GM10248 (cell line): ENCODE measurements at regions of chr10 and their contacts with region 1.

Region 1: GRCh38 chr10:91251430-91252056 is 31.1 kb downstream of the PCGF5 start:
- DNase-seq: peak; percentile 31
- CTCF ChIP-seq: peak; percentile 75

Region 2: GRCh38 chr10:90879062-90879461 is 372.5 kb before region 1 on chr10:
- CTCF ChIA-PET with region 1: interaction called, 24 read pairs
- POLR2A ChIA-PET with region 1: no interaction called
- DNase-seq: no peak
- CTCF ChIP-seq: no peak

Region 3: DNA sequence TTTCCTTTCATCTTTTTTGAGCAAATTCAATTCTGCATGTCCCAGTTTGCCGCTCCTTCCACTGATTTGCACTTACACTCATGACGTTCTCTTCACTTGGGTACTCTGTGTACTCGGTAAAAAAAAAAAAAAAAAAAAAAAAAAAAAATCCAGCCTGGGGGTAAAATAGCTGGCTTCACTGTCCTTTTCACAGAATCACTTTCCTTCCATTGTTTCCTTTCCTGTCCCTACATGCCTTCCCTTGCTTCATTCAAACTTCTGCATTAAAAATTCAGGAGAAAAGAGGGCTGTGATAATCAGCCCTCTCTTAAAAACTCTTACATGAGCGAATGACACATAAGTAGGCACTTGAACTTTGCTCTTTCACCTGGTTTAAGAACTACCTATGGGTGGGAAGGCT is 339.4 kb before region 1 on chr10:
- CTCF ChIA-PET with region 1: interaction called, 113 read pairs
- POLR2A ChIA-PET with region 1: interaction called, 4 read pairs
- DNase-seq: no peak
- CTCF ChIP-seq: no peak

Region 4: GRCh38 chr10:90999512-91000172 is 251.9 kb before region 1 on chr10:
- CTCF ChIA-PET with region 1: interaction called, 59 read pairs
- POLR2A ChIA-PET with region 1: no interaction called
- DNase-seq: peak; percentile 24
- CTCF ChIP-seq: no peak

Region 5: GRCh38 chr10:91017198-91017597 is 234.3 kb before region 1 on chr10:
- CTCF ChIA-PET with region 1: interaction called, 19 read pairs
- POLR2A ChIA-PET with region 1: no interaction called
- DNase-seq: no peak
- CTCF ChIP-seq: no peak

Region 6: GRCh38 chr10:91088300-91089140 is 163.0 kb before region 1 on chr10:
- CTCF ChIA-PET with region 1: interaction called, 19 read pairs
- POLR2A ChIA-PET with region 1: no interaction called
- DNase-seq: peak; percentile 38
- CTCF ChIP-seq: peak; percentile 20

Region 7: GRCh38 chr10:91137822-91138221 is 113.7 kb before region 1 on chr10:
- CTCF ChIA-PET with region 1: no interaction called
- POLR2A ChIA-PET with region 1: no interaction called
- DNase-seq: no peak
- CTCF ChIP-seq: no peak

Region 8: DNA sequence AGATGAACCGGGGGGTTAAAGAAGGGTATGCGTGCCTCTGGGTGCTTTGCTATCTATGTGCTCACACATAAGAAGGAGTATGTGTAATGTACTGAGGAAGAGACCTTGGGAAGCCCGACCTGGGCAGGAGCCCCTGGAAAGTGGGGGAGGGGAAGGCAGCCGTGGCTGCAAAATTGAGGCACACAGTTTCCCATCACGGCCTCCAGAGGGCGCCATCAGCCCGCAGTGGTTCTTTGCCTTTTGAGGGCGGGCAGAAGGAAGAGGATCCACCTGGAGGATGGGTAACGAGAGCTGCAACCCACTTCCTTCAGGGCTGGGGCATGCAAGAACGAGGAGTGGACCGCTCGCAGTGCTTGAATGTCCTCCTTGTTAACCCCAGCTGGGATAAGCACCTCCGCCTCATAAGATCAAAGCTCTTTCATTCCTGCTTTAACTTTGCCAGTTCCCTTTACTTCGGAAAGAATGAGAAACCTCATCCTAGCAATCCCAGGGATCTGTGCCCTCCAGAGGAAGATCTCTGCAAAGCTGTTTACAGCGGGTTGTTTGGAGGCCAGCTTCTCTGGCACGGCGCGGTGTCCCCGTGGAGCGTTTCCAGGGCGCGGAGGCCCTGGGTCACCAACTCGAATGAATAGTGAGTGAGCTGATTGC is 46.8 kb after region 1 on chr10:
- CTCF ChIA-PET with region 1: interaction called, 14 read pairs
- POLR2A ChIA-PET with region 1: no interaction called
- DNase-seq: peak; percentile 82
- CTCF ChIP-seq: peak; percentile 95